ENCODE measurements at regions of chr17 and their contacts with region 1.

Region 1: DNA sequence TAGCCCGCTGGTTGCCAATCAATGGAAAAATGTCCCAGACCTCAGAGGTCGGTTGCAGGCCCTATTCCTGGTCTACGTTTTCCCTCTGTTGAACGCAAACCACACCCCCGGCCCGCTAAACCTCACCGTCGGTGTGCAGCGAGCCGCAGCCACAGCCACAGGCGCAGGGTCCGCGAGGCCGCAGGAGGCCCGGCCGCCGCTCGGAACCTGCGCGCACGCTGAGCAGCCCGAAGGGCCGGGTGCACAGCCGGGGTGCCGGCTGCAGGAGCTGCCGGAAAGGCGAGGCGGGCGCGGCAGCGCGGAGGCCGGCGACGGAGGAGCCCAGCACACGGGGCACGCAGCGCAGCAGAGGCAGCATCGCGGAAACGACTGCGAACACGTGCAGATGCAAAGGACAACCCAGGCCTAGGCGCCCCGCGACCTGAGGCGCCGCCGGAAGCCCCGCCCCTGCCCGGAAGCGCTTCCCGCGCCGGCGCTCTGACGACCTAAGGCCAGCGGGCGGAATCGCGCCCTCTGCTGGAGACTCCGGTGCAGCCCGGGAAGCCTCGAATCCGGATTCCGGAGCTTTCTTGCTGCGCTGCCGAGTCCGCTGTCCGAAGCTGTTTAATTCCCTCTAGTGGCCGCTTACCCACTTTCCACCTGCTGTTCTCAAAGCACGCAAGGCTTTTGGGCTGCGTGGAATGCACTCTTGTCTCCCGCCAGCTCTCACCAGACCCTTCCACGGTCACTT is at the start of gene C1QBP:
- DNase-seq: peak; percentile 83
- H3K4me3 ChIP-seq: peak within 1 kb of the TSS; percentile 67
- CTCF ChIP-seq: peak; percentile 99

Region 2: GRCh38 chr17:5472511-5472910 is 33.6 kb after region 1 on chr17:
- in situ Hi-C with region 1: loop called (anchors 5 kb)
- DNase-seq: no peak
- H3K4me3 ChIP-seq: no peak overlapping the region
- CTCF ChIP-seq: no peak

Measured in astrocyte of the cerebellum (primary cell).